ENCODE measurements at regions of chr17 and their contacts with region 1.

Region 1: GRCh38 chr17:57747221-57748017 is 2.3 kb upstream of the CCDC182 start:
- DNase-seq: peak; percentile 18
- H3K4me3 ChIP-seq: no peak overlapping the region
- H3K27ac ChIP-seq: no peak overlapping the region
- H3K4me1 ChIP-seq: no peaks in the 10 kb centered on the region
- H3K27me3 ChIP-seq: no peaks in the 10 kb centered on the region
- CTCF ChIP-seq: peak; percentile 52 to 71 (median 58)
- EP300 ChIP-seq: no peak
- POLR2A ChIP-seq: no peak

Region 2: GRCh38 chr17:57121338-57122042 is 625.9 kb before region 1 on chr17:
- in situ Hi-C with region 1: loop called in 3 of 4 experiments (anchors 10 to 25 kb)
- intact Hi-C with region 1: no loop called
- DNase-seq: no peak
- H3K4me3 ChIP-seq: no peak overlapping the region
- H3K27ac ChIP-seq: no peak overlapping the region
- H3K4me1 ChIP-seq: no peaks in the 10 kb centered on the region
- H3K27me3 ChIP-seq: no peaks in the 10 kb centered on the region
- CTCF ChIP-seq: peak in 4 of 5 experiments; percentile 21 to 31 (median 30)
- EP300 ChIP-seq: no peak
- POLR2A ChIP-seq: no peak

Region 3: DNA sequence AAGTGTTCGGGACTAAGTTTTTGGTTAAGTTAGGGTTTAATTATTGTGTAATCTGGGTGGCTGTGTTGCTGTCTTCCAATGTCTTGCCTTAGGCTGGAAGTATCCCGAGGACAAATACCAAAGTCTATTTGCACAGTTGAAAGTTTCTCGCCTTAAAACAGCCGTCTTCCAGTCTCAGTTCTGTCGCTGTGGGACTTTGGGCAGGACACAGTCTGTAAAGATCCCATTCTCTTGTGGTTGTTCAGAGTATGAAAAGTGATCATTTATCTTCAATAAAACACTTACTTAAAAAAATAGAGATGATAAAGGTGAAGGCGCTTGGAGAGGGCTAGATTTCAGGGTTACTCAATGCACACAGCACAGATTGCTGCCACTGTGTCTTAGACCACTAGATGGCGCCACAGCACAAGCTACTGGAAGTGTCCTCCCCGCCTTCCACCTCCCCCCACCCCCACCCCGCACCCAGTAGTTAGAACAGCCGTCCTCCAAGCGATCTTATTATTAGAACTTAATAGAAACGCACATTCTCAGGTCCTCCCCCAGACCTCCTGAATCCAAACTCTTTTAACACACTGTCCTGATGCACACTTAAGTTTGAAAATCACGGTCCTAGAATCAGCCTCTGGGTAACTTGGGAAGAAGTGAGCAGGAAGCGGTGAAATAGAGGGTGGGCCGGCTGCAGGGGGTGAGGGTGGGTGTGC is 616.5 kb before region 1 on chr17:
- in situ Hi-C with region 1: loop called in 3 of 4 experiments (anchors 10 to 25 kb)
- intact Hi-C with region 1: loop called (anchors 10 kb)
- DNase-seq: peak; percentile 86
- H3K4me3 ChIP-seq: peak overlapping the region in 1 of 4 donors; percentile 3
- H3K27ac ChIP-seq: no peak overlapping the region
- H3K4me1 ChIP-seq: no peaks in the 10 kb centered on the region
- H3K27me3 ChIP-seq: no peaks in the 10 kb centered on the region
- CTCF ChIP-seq: peak; percentile 66 to 93 (median 90)
- EP300 ChIP-seq: no peak
- POLR2A ChIP-seq: no peak

Region 4: DNA sequence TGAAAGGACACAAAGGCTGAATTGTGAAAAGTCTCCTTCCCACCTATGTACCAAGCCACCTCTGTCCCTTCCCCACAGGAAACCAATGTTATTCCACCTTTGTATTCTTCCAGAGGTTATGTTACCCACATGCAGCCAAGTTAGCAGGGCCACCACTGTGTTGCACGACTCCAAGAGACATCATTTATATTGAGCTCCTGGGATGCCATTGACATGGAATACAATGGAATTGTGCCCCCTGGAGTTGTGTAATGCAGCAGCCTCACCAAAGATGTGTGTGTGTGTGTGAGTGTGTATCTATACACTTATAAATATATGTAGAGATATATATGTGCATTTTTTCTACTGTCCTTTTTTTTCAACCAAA is 512.7 kb before region 1 on chr17:
- in situ Hi-C with region 1: loop called in 2 of 4 experiments (anchors 10 to 25 kb)
- intact Hi-C with region 1: no loop called
- DNase-seq: no peak
- H3K4me3 ChIP-seq: no peak overlapping the region
- H3K27ac ChIP-seq: no peak overlapping the region
- H3K4me1 ChIP-seq: no peaks in the 10 kb centered on the region
- H3K27me3 ChIP-seq: no peaks in the 10 kb centered on the region
- CTCF ChIP-seq: no peak
- EP300 ChIP-seq: no peak
- POLR2A ChIP-seq: no peak

Region 5: DNA sequence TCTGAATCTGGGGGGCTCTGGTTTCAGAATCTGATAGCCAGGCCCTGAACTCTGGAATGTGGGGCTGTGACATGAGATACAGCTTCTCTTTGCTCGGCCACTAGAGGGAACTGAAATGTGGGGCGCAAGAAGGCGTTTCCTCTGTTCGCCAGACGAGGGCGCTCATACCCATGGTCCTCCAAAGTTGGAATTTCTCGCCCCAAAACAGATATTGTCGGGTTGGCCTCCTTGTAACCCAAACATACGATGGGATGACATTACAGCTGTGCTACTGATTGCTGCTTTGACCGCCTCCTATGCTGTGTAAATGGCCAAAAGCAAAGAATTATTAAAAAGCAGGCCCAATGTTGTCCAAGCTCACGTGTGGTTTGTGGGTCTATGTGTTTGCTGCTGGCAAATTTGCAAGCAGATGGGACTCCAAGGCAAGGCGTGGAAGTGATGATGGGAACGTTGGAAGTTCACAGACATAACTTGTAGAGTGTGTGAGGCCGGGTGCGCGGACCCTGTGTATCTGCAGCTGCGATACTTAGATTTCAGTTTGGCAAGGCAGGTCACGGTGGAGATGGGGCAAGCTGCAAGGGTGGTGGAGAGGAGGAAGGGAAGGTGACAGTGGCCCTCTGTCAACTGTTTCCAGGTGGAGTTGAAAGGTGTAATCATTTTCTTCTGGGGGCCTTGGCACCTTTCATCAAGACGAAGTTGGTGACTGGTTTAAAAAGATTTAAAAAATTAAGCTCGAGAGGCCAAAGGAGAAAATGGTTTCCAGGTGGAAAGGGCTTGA is 504.1 kb before region 1 on chr17:
- in situ Hi-C with region 1: loop called in 3 of 4 experiments (anchors 10 to 25 kb)
- intact Hi-C with region 1: loop called (anchors 5 kb)
- DNase-seq: peak; percentile 79
- H3K4me3 ChIP-seq: no peak overlapping the region
- H3K27ac ChIP-seq: no peak overlapping the region
- H3K4me1 ChIP-seq: no peaks in the 10 kb centered on the region
- H3K27me3 ChIP-seq: no peaks in the 10 kb centered on the region
- CTCF ChIP-seq: peak; percentile 98 to 99 (median 98)
- EP300 ChIP-seq: no peak
- POLR2A ChIP-seq: no peak

Region 6: DNA sequence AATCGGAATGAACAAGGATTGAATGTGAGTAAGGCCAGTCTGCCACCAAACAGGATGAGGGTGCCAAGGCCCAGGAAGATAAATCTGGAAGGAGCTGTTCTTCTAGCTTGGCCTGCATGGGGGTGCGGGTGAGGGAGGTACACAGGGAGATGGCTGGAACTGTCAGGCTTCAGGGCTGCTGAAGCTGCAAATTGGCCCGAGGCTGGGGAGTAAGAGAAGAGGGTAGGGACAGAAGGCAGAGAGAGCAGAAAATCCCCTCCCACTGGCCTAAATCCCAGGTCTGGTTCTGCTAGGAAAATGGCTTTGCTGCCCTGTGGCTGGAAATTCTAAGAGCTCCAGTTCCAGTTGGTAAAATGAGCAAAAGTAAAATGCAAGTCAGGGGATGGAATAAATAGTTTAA is 90.2 kb before region 1 on chr17:
- in situ Hi-C with region 1: no loop called
- intact Hi-C with region 1: no loop called
- DNase-seq: no peak
- H3K4me3 ChIP-seq: no peak overlapping the region
- H3K27ac ChIP-seq: no peak overlapping the region
- H3K4me1 ChIP-seq: peaks cover 0 to 2% (median under 1%) of the 10 kb centered on the region in 4 donors
- H3K27me3 ChIP-seq: no peaks in the 10 kb centered on the region
- CTCF ChIP-seq: no peak
- EP300 ChIP-seq: no peak
- POLR2A ChIP-seq: no peak

Region 7: DNA sequence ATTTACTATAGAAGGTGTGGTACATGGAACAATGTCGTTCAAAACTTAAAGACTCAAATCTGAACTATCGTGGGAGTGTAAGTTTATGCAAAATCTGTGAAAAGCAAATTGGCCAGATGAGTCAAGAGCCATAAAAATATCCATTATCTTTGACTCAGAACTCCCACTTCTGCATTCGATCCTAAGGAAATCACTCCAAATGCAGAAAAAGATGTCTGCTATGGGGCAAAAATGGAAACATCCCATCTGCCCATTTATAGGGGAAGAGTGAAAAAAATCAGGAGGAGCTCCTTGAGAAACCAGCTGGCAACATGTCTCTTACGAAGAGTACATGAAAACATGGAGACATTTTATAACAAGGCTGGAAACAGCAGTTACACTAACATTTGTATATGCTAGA is 41.3 kb after region 1 on chr17:
- in situ Hi-C with region 1: no loop called
- intact Hi-C with region 1: no loop called
- DNase-seq: no peak
- H3K4me3 ChIP-seq: no peak overlapping the region
- H3K27ac ChIP-seq: no peak overlapping the region
- H3K4me1 ChIP-seq: no peaks in the 10 kb centered on the region
- H3K27me3 ChIP-seq: peaks cover 35% of the 10 kb centered on the region
- CTCF ChIP-seq: no peak
- EP300 ChIP-seq: no peak
- POLR2A ChIP-seq: no peak

Region 8: GRCh38 chr17:57810721-57811637 is 63.6 kb after region 1 on chr17:
- in situ Hi-C with region 1: no loop called
- intact Hi-C with region 1: no loop called
- DNase-seq: peak; percentile 11
- H3K4me3 ChIP-seq: peak overlapping the region in 1 of 4 donors; percentile 25
- H3K27ac ChIP-seq: peak overlapping the region in 3 of 4 donors; percentile 30 to 61 (median 51)
- H3K4me1 ChIP-seq: peaks cover 0 to 15% (median 4%) of the 10 kb centered on the region in 4 donors
- H3K27me3 ChIP-seq: peaks cover 16% of the 10 kb centered on the region
- CTCF ChIP-seq: no peak
- EP300 ChIP-seq: no peak
- POLR2A ChIP-seq: no peak

Region 9: GRCh38 chr17:58991718-58992331 is 1244.4 kb after region 1 on chr17:
- in situ Hi-C with region 1: no loop called
- intact Hi-C with region 1: no loop called
- DNase-seq: peak; percentile 22
- H3K4me3 ChIP-seq: no peak overlapping the region
- H3K27ac ChIP-seq: peak overlapping the region in 1 of 4 donors; percentile 21
- H3K4me1 ChIP-seq: no peaks in the 10 kb centered on the region
- H3K27me3 ChIP-seq: no peaks in the 10 kb centered on the region
- CTCF ChIP-seq: no peak
- EP300 ChIP-seq: no peak
- POLR2A ChIP-seq: no peak

Measured in transverse colon (tissue), 4 donors.